Activated naive CD4-positive, alpha-beta T cell treated with anti-CD3 and anti-CD28 coated beads for 36 hours (primary cell): ENCODE measurements at regions of chr15 and their contacts with region 1.

Region 1: GRCh38 chr15:31488426-31489204 is 162.0 kb downstream of the KLF13 start:
- DNase-seq: peak; percentile 57
- H3K4me3 Mint-ChIP-seq: no peak overlapping the region
- H3K27ac Mint-ChIP-seq: no peak overlapping the region
- H3K4me1 Mint-ChIP-seq: peaks cover 23% of the 10 kb centered on the region
- H3K27me3 Mint-ChIP-seq: no peaks in the 10 kb centered on the region

Region 2: DNA sequence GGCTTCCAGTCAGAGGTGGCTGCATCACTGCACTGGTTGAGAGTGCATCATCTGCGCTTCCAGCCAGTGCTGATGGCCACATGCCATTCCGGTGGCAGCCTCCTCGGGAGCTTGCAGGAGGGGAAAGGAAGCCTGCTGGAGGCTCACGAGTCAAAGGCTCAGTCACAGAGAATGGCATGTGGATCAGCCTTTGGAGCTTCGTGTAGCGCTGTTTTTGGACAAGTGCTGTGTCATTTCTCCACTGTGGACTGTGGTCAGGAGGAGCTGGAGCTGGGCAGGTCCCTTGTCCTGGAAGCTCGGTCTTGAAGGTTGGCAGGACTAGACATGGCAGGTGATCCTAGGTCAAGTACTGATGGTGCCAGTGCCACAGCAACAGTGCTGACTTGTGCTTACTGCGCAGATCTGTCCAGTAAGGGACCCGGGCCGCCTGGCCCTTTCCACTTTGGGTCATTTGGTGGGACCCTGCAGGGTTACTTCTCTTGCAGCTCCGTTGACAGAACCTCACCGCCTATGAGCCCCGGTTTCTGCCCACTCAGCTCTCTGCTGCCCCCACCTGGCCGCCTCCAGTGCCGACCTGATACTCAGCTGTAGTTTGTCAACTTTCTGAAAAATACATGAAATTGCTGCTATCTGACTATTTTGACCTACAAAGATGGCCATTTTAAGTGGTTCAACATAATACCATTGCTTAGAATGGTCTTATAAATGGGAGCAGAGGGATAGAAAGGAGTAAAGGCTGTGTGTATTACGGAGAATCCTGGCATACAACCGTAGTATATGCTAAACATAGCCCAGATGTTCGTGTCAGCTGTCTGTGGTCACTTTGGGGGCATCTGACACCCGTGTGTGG is 359.5 kb before region 1 on chr15:
- CTCF ChIA-PET with region 1: interaction called, 5 read pairs
- intact Hi-C with region 1: loop called (anchors 5 kb)
- DNase-seq: peak; percentile 84
- H3K4me3 Mint-ChIP-seq: no peak overlapping the region
- H3K27ac Mint-ChIP-seq: no peak overlapping the region
- H3K4me1 Mint-ChIP-seq: no peaks in the 10 kb centered on the region
- H3K27me3 Mint-ChIP-seq: no peaks in the 10 kb centered on the region

Region 3: DNA sequence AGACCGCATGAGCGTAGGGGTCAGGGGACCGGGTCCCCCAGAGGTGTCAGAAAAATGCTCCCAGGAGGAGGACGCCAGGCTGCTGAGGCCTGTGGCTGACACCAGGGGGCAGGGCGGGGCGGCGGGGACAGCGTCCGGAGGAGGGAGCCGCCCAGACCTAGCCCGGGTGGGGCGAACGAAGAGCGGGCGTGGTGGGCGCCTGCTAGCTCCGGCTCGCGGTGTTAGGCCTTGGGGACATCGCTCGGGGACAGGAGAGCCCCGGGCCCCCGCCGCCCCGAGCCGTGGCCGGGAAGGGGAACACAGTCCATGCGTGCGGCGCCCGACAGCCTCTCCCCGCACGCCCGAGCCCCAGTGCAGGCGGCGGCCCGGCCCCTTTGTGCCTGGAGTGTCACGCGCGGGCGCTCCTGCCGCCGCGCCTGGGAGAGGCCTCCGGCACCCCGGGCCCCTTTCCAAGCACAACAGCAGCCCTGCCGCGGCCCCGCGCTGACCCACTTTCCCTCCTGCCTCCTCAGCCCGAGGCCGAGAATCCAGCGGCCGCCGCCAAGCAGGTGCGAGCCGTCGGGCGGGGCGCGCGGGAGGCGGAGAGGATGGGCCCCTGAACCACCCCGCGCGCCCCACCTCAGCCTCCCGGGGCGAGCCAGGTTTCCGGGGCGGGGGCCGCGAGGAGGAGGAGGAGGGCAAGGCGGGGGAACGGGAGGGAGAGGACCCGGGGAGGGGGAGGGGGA is 273.0 kb before region 1 on chr15:
- CTCF ChIA-PET with region 1: interaction called, 32 read pairs
- intact Hi-C with region 1: loop called (anchors 1 kb)
- DNase-seq: peak; percentile 86
- H3K4me3 Mint-ChIP-seq: peak overlapping the region; percentile 62
- H3K27ac Mint-ChIP-seq: peak overlapping the region; percentile 66
- H3K4me1 Mint-ChIP-seq: peaks cover 9% of the 10 kb centered on the region
- H3K27me3 Mint-ChIP-seq: no peaks in the 10 kb centered on the region

Region 4: GRCh38 chr15:31365655-31366127 is 122.9 kb before region 1 on chr15:
- CTCF ChIA-PET with region 1: interaction called, 76 read pairs
- intact Hi-C with region 1: loop called (anchors 1 kb)
- DNase-seq: peak; percentile 88
- H3K4me3 Mint-ChIP-seq: peak overlapping the region; percentile 74
- H3K27ac Mint-ChIP-seq: peak overlapping the region; percentile 99
- H3K4me1 Mint-ChIP-seq: peaks cover 97% of the 10 kb centered on the region
- H3K27me3 Mint-ChIP-seq: no peaks in the 10 kb centered on the region

Region 5: GRCh38 chr15:31472636-31473384 is 15.8 kb before region 1 on chr15:
- CTCF ChIA-PET with region 1: interaction called, 50 read pairs
- intact Hi-C with region 1: loop called (anchors 1 kb)
- DNase-seq: peak; percentile 81
- H3K4me3 Mint-ChIP-seq: peak overlapping the region; percentile 64
- H3K27ac Mint-ChIP-seq: peak overlapping the region; percentile 94
- H3K4me1 Mint-ChIP-seq: peaks cover 44% of the 10 kb centered on the region
- H3K27me3 Mint-ChIP-seq: no peaks in the 10 kb centered on the region

Region 6: DNA sequence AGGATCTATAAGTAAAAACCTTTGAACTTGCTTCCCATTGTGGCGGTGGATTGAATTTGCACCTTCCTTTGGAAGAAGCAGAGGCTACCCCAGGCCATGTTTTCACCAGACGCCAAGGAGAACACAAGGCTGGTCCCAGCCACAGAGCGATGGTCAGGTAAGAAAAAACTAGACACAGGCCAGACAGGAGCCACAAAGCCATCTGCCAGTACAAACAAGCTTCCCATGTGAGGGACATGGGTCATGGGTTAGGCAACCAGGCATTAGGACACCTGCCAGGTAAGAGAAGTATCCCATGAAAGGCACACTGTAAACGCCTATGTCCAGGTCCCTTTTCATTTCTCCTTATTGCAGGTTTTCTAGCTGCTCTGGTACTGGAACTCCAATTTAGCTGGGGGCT is 28.3 kb after region 1 on chr15:
- CTCF ChIA-PET with region 1: no interaction called
- intact Hi-C with region 1: no loop called
- DNase-seq: no peak
- H3K4me3 Mint-ChIP-seq: no peak overlapping the region
- H3K27ac Mint-ChIP-seq: no peak overlapping the region
- H3K4me1 Mint-ChIP-seq: peaks cover 14% of the 10 kb centered on the region
- H3K27me3 Mint-ChIP-seq: peaks cover 8% of the 10 kb centered on the region